Caco-2 (cell line): ENCODE measurements at regions of chr2 and their contacts with region 1.

Region 1: DNA sequence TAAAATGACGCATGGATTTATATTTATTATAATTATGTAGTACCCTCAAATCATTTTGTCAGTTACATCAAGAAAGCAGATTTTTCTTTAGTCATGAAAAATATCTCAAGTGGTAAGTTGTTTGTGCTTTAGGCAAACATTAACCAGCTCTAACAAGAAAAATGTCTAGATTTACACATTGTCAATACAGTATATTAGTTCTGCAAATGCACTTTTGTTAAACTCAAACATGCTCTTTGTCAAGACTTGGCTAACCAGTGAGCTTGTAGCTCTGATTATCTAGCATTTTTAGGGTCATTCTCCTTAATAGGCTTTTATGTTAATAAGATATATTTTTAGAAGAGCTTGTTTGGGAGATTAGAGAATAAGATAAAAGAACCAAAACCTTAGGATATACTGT is 32.7 kb downstream of the SCRN3 start:
- DNase-seq: peak in 1 of 2 experiments; percentile 13
- H3K4me3 ChIP-seq: no peak overlapping the region
- H3K4me3 Mint-ChIP-seq: no peak overlapping the region
- H3K27ac Mint-ChIP-seq: no peak overlapping the region
- H3K4me1 ChIP-seq: peaks cover 20% of the 10 kb centered on the region
- H3K4me1 Mint-ChIP-seq: peaks cover 10% of the 10 kb centered on the region
- H3K27me3 ChIP-seq: no peaks in the 10 kb centered on the region
- H3K27me3 Mint-ChIP-seq: no peaks in the 10 kb centered on the region
- CTCF ChIP-seq: no peak

Region 2: GRCh38 chr2:174385201-174385600 is 43.0 kb before region 1 on chr2:
- CTCF ChIA-PET with region 1: no interaction called
- POLR2A ChIA-PET with region 1: no interaction called
- intact Hi-C with region 1: loop called (anchors 1 kb)
- DNase-seq: no peak
- H3K4me3 ChIP-seq: no peak overlapping the region
- H3K4me3 Mint-ChIP-seq: no peak overlapping the region
- H3K27ac Mint-ChIP-seq: no peak overlapping the region
- H3K4me1 ChIP-seq: no peaks in the 10 kb centered on the region
- H3K4me1 Mint-ChIP-seq: no peaks in the 10 kb centered on the region
- H3K27me3 ChIP-seq: no peaks in the 10 kb centered on the region
- H3K27me3 Mint-ChIP-seq: no peaks in the 10 kb centered on the region
- CTCF ChIP-seq: no peak

Region 3: DNA sequence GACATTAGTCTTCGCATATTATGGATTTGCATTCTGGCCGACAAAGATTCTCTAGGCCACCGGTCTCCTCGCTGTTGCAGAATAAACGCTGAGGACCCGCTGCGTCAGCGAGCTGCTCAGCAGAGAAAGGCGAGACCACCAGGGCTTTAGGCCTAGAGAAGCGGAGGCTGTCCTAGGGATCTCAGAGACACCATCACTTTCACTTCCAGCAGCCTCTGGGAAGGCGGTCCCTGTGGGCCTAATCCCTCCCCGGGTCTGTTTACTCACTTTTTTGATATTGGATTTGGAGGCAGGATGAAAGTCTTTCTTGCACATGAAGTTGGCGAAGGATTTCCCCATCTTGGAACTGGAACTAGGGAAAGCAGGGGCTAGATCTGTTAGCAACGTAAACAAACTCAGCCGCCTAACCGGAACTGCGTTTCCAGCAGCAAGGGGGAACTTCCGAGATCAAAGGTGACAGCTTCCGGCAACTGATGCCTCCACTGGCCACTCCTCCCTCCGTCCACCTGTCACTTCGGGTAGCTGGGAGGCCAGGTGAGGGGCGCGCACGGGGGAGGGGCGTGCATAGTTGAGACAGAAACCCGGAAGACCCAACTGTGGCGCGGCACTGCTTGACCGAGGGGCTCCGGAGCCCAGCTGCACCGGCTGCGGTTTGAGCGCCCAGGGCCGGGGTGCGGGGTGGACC is 32.8 kb before region 1 on chr2 and contains the start of gene SCRN3:
- CTCF ChIA-PET with region 1: no interaction called
- POLR2A ChIA-PET with region 1: interaction called, 8 read pairs
- intact Hi-C with region 1: loop called (anchors 2 kb)
- DNase-seq: peak; percentile 97 to 98
- H3K4me3 ChIP-seq: peak within 1 kb of the TSS; percentile 58
- H3K4me3 Mint-ChIP-seq: peak within 1 kb of the TSS; percentile 96
- H3K27ac Mint-ChIP-seq: peak within 1 kb of the TSS; percentile 97
- H3K4me1 ChIP-seq: no peaks in the 10 kb centered on the region
- H3K4me1 Mint-ChIP-seq: no peaks in the 10 kb centered on the region
- H3K27me3 ChIP-seq: no peaks in the 10 kb centered on the region
- H3K27me3 Mint-ChIP-seq: no peaks in the 10 kb centered on the region
- CTCF ChIP-seq: no peak
- total RNA-seq, gene SCRN3: 23.6 and 26.4 TPM in 2 replicates

Region 4: DNA sequence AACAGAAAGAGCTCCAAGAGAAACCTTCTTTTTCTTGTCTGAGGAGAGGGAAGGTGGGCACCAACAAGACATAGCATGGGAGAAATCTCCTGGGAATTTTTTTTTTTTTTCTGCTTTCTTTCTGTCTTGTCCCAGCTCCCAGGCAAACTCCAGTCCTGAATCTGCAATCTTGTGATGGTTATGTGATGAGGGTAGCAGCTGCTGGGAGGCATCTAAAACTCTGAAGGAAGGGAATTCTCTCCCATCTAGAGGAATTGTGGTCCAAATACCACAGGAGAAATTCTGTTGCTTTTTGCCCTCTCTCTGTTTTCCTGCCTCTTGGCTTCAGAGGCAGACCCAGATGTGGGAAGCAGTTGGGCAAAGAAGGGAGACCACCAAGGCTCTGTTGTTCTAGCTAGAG is 16.0 kb before region 1 on chr2:
- CTCF ChIA-PET with region 1: no interaction called
- POLR2A ChIA-PET with region 1: no interaction called
- intact Hi-C with region 1: loop called (anchors 2 kb)
- DNase-seq: no peak
- H3K4me3 ChIP-seq: no peak overlapping the region
- H3K4me3 Mint-ChIP-seq: no peak overlapping the region
- H3K27ac Mint-ChIP-seq: no peak overlapping the region
- H3K4me1 ChIP-seq: 0 out of 2 replicates have a peak, but pooled peaks cover 4% of the 10 kb centered on the region
- H3K4me1 Mint-ChIP-seq: no peaks in the 10 kb centered on the region
- H3K27me3 ChIP-seq: no peaks in the 10 kb centered on the region
- H3K27me3 Mint-ChIP-seq: no peaks in the 10 kb centered on the region
- CTCF ChIP-seq: no peak